IMR-90 (cell line): ENCODE measurements at regions of chr7 and their contacts with region 1.

Region 1: GRCh38 chr7:92833024-92833765 is 3.2 kb downstream of the CDK6 start:
- DNase-seq: peak; percentile 74
- ATAC-seq: peak; percentile 3
- H3K4me3 ChIP-seq: peak overlapping the region; percentile 98
- H3K27ac ChIP-seq: peak overlapping the region; percentile 98
- H3K4me1 ChIP-seq: peaks cover 6% of the 10 kb centered on the region; the same call in 1 of the 2 replicates
- H3K27me3 ChIP-seq: no peaks in the 10 kb centered on the region
- CTCF ChIP-seq: peak; percentile 58
- POLR2A ChIP-seq: peak; percentile 32; the same call in 1 of the 2 replicates
- RAD21 ChIP-seq: peak; percentile 71

Region 2: GRCh38 chr7:92621026-92621540 is 212.1 kb before region 1 on chr7:
- CTCF ChIA-PET with region 1: interaction called, 4 read pairs
- POLR2A ChIA-PET with region 1: no interaction called
- dilution Hi-C with region 1: no loop called
- in situ Hi-C with region 1: loop called (anchors 5 kb)
- intact Hi-C with region 1: loop called (anchors 1 kb)
- DNase-seq: peak; percentile 94
- ATAC-seq: peak; percentile 84
- H3K4me3 ChIP-seq: no peak overlapping the region
- H3K27ac ChIP-seq: peak overlapping the region; percentile 45; the same call in 1 of the 2 replicates
- H3K4me1 ChIP-seq: peaks cover 6% of the 10 kb centered on the region
- H3K27me3 ChIP-seq: no peaks in the 10 kb centered on the region
- CTCF ChIP-seq: peak; percentile 84
- POLR2A ChIP-seq: no peak
- RAD21 ChIP-seq: peak; percentile 89

Region 3: GRCh38 chr7:92751902-92752901 is 81.0 kb before region 1 on chr7:
- CTCF ChIA-PET with region 1: no interaction called
- POLR2A ChIA-PET with region 1: no interaction called
- dilution Hi-C with region 1: no loop called
- in situ Hi-C with region 1: no loop called
- intact Hi-C with region 1: loop called (anchors 5 kb)
- DNase-seq: peak; percentile 98
- ATAC-seq: peak; percentile 82
- H3K4me3 ChIP-seq: no peak overlapping the region
- H3K27ac ChIP-seq: peak overlapping the region; percentile 43; the same call in 1 of the 2 replicates
- H3K4me1 ChIP-seq: peaks cover 25% of the 10 kb centered on the region
- H3K27me3 ChIP-seq: no peaks in the 10 kb centered on the region
- CTCF ChIP-seq: no peak
- POLR2A ChIP-seq: no peak
- RAD21 ChIP-seq: no peak

Region 4: GRCh38 chr7:92988051-92988450 is 154.9 kb after region 1 on chr7:
- CTCF ChIA-PET with region 1: no interaction called
- POLR2A ChIA-PET with region 1: interaction called, 5 read pairs
- dilution Hi-C with region 1: no loop called
- in situ Hi-C with region 1: no loop called
- intact Hi-C with region 1: loop called (anchors 1 kb)
- DNase-seq: peak; percentile 78
- ATAC-seq: peak; percentile 64
- H3K4me3 ChIP-seq: no peak overlapping the region
- H3K27ac ChIP-seq: no peak overlapping the region
- H3K4me1 ChIP-seq: peaks cover 7% of the 10 kb centered on the region
- H3K27me3 ChIP-seq: no peaks in the 10 kb centered on the region
- CTCF ChIP-seq: peak; percentile 52
- POLR2A ChIP-seq: no peak
- RAD21 ChIP-seq: peak; percentile 58

Region 5: GRCh38 chr7:93055543-93056107 is 222.4 kb after region 1 on chr7:
- CTCF ChIA-PET with region 1: no interaction called
- POLR2A ChIA-PET with region 1: no interaction called
- dilution Hi-C with region 1: no loop called
- in situ Hi-C with region 1: loop called (anchors 5 kb)
- intact Hi-C with region 1: loop called (anchors 1 kb)
- DNase-seq: peak; percentile 62
- ATAC-seq: peak; percentile 89
- H3K4me3 ChIP-seq: no peak overlapping the region
- H3K27ac ChIP-seq: no peak overlapping the region
- H3K4me1 ChIP-seq: no peaks in the 10 kb centered on the region
- H3K27me3 ChIP-seq: no peaks in the 10 kb centered on the region; the same call in 1 of the 2 replicates
- CTCF ChIP-seq: peak; percentile 82
- POLR2A ChIP-seq: no peak
- RAD21 ChIP-seq: peak; percentile 86

Region 6: GRCh38 chr7:93442478-93443224 is 609.5 kb after region 1 on chr7:
- CTCF ChIA-PET with region 1: no interaction called
- POLR2A ChIA-PET with region 1: no interaction called
- dilution Hi-C with region 1: no loop called
- in situ Hi-C with region 1: no loop called
- intact Hi-C with region 1: no loop called
- DNase-seq: peak; percentile 13
- ATAC-seq: peak; percentile 63; the same call in 1 of the 2 replicates
- H3K4me3 ChIP-seq: no peak overlapping the region
- H3K27ac ChIP-seq: no peak overlapping the region
- H3K4me1 ChIP-seq: no peaks in the 10 kb centered on the region
- H3K27me3 ChIP-seq: no peaks in the 10 kb centered on the region; the same call in 1 of the 2 replicates
- CTCF ChIP-seq: peak; percentile 52
- POLR2A ChIP-seq: no peak
- RAD21 ChIP-seq: 0 out of 2 replicates have a peak, but pooled peaks have one; percentile 29